ENCODE measurements at regions of chr10 and their contacts with region 1.

Region 1: GRCh38 chr10:15106352-15107013 is 9.3 kb downstream of the RPP38 start:
- DNase-seq: peak; percentile 48 to 71 (median 65)
- H3K4me3 ChIP-seq: no peak overlapping the region
- H3K4me3 Mint-ChIP-seq: no peak overlapping the region
- H3K27ac ChIP-seq: no peak overlapping the region
- H3K27ac Mint-ChIP-seq: peak overlapping the region in 2 of 7 donors; percentile 25 to 32
- H3K4me1 ChIP-seq: no peaks in the 10 kb centered on the region
- H3K4me1 Mint-ChIP-seq: peaks cover 4% of the 10 kb centered on the region
- H3K27me3 ChIP-seq: no peaks in the 10 kb centered on the region
- H3K27me3 Mint-ChIP-seq: peaks cover 0 to 1% (median 0%) of the 10 kb centered on the region in 3 donors
- CTCF ChIP-seq: peak; percentile 95

Region 2: GRCh38 chr10:14491806-14492205 is 614.7 kb before region 1 on chr10:
- intact Hi-C with region 1: loop called (anchors 5 to 10 kb)
- DNase-seq: peak; percentile 33 to 75 (median 34)
- H3K4me3 ChIP-seq: no peak overlapping the region
- H3K4me3 Mint-ChIP-seq: no peak overlapping the region
- H3K27ac ChIP-seq: no peak overlapping the region
- H3K27ac Mint-ChIP-seq: peak overlapping the region in 1 of 7 donors; percentile 55
- H3K4me1 ChIP-seq: peaks cover 3 to 9% of the 10 kb centered on the region in 2 donors
- H3K4me1 Mint-ChIP-seq: peaks cover 7% of the 10 kb centered on the region
- H3K27me3 ChIP-seq: peaks cover 2 to 3% of the 10 kb centered on the region in 2 donors
- H3K27me3 Mint-ChIP-seq: peaks cover 11 to 27% (median 15%) of the 10 kb centered on the region in 3 donors
- CTCF ChIP-seq: no peak

Region 3: GRCh38 chr10:14500172-14500765 is 606.2 kb before region 1 on chr10:
- intact Hi-C with region 1: loop called (anchors 5 to 10 kb)
- DNase-seq: peak in 2 of 3 donors; percentile 3
- H3K4me3 ChIP-seq: no peak overlapping the region
- H3K4me3 Mint-ChIP-seq: no peak overlapping the region
- H3K27ac ChIP-seq: no peak overlapping the region
- H3K27ac Mint-ChIP-seq: peak overlapping the region in 3 of 7 donors; percentile 37 to 65 (median 63)
- H3K4me1 ChIP-seq: peaks cover 3 to 14% of the 10 kb centered on the region in 2 donors
- H3K4me1 Mint-ChIP-seq: peaks cover 19% of the 10 kb centered on the region
- H3K27me3 ChIP-seq: no peaks in the 10 kb centered on the region
- H3K27me3 Mint-ChIP-seq: peaks cover 7 to 8% (median 8%) of the 10 kb centered on the region in 3 donors
- CTCF ChIP-seq: no peak

Region 4: GRCh38 chr10:14926722-14927416 is 179.6 kb before region 1 on chr10:
- intact Hi-C with region 1: no loop called
- DNase-seq: no peak
- H3K4me3 ChIP-seq: no peak overlapping the region
- H3K4me3 Mint-ChIP-seq: no peak overlapping the region
- H3K27ac ChIP-seq: no peak overlapping the region
- H3K27ac Mint-ChIP-seq: peak overlapping the region in 3 of 7 donors; percentile 16 to 75 (median 27)
- H3K4me1 ChIP-seq: no peaks in the 10 kb centered on the region
- H3K4me1 Mint-ChIP-seq: no peaks in the 10 kb centered on the region
- H3K27me3 ChIP-seq: no peaks in the 10 kb centered on the region
- H3K27me3 Mint-ChIP-seq: no peaks in the 10 kb centered on the region
- CTCF ChIP-seq: no peak

Region 5: GRCh38 chr10:14995964-14996565 is 110.4 kb before region 1 on chr10:
- intact Hi-C with region 1: loop called in 1 of 2 experiments (anchors 5 kb)
- DNase-seq: no peak
- H3K4me3 ChIP-seq: no peak overlapping the region
- H3K4me3 Mint-ChIP-seq: no peak overlapping the region
- H3K27ac ChIP-seq: no peak overlapping the region
- H3K27ac Mint-ChIP-seq: no peak overlapping the region
- H3K4me1 ChIP-seq: no peaks in the 10 kb centered on the region
- H3K4me1 Mint-ChIP-seq: no peaks in the 10 kb centered on the region
- H3K27me3 ChIP-seq: no peaks in the 10 kb centered on the region
- H3K27me3 Mint-ChIP-seq: peaks cover 0 to 7% (median 4%) of the 10 kb centered on the region in 3 donors
- CTCF ChIP-seq: no peak

Region 6: GRCh38 chr10:15168781-15169554 is 62.5 kb after region 1 on chr10:
- intact Hi-C with region 1: loop called in 1 of 2 experiments (anchors 10 kb)
- DNase-seq: peak; percentile 88 to 95 (median 91)
- H3K4me3 ChIP-seq: peak overlapping the region in 1 of 3 experiments; percentile 45
- H3K4me3 Mint-ChIP-seq: peak overlapping the region; percentile 49 to 62
- H3K27ac ChIP-seq: no peak overlapping the region
- H3K27ac Mint-ChIP-seq: peak overlapping the region in 2 of 7 donors; percentile 50 to 57
- H3K4me1 ChIP-seq: peaks cover 16 to 22% of the 10 kb centered on the region in 2 donors
- H3K4me1 Mint-ChIP-seq: peaks cover 19% of the 10 kb centered on the region
- H3K27me3 ChIP-seq: peaks cover 30 to 32% of the 10 kb centered on the region in 2 donors
- H3K27me3 Mint-ChIP-seq: peaks cover 38 to 48% (median 46%) of the 10 kb centered on the region in 3 donors
- CTCF ChIP-seq: no peak

Region 7: DNA sequence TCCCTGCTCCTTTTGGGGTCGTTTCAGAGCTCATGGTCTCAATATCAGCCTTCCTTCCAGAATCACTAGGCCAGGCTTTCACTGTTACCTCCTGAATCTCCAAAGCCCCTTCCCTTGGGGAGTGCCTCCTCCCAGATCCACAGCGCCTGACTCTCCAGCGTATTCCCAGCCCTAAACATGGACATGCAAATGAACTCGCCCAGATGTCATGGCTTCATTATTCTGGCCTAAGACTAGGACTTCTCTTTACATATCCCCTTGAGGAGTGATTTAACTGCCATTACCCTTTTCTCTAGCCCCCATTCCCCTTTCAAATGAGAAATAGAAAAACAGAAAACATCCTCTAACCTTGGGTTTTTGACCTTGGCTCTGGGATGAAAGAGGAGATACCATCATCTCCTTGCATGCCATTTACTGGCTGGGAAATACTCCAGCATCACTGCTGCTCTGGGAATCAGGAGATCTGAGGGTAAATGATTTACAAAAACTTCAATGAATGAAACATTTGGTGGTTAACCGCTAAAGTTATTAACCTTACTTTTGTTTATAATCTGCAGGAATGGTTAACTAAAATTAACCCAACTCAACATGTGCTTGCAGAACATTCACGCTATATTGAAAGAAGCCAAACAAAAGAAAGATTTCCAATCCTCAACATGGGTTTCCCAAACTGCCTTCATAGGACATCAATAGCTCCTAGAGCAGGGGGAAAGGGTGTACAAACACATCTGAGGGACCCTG is 227.6 kb after region 1 on chr10:
- intact Hi-C with region 1: no loop called
- DNase-seq: no peak
- H3K4me3 ChIP-seq: no peak overlapping the region
- H3K4me3 Mint-ChIP-seq: no peak overlapping the region
- H3K27ac ChIP-seq: no peak overlapping the region
- H3K27ac Mint-ChIP-seq: no peak overlapping the region
- H3K4me1 ChIP-seq: no peaks in the 10 kb centered on the region
- H3K4me1 Mint-ChIP-seq: no peaks in the 10 kb centered on the region
- H3K27me3 ChIP-seq: no peaks in the 10 kb centered on the region
- H3K27me3 Mint-ChIP-seq: peaks cover 0 to 17% (median 14%) of the 10 kb centered on the region in 3 donors
- CTCF ChIP-seq: no peak